CD8-positive, alpha-beta memory T cell (primary cell): ENCODE measurements at regions of chr10 and their contacts with region 1.

Region 1: GRCh38 chr10:100338434-100339036 is 8.5 kb upstream of the SCD start:
- DNase-seq: peak; percentile 63 to 80 (median 69)
- H3K4me3 ChIP-seq: no peak overlapping the region
- H3K4me3 Mint-ChIP-seq: no peak overlapping the region
- H3K27ac ChIP-seq: no peak overlapping the region
- H3K27ac Mint-ChIP-seq: peak overlapping the region in 2 of 8 donors; percentile 9 to 32
- H3K4me1 ChIP-seq: no peaks in the 10 kb centered on the region
- H3K4me1 Mint-ChIP-seq: no peaks in the 10 kb centered on the region
- H3K27me3 ChIP-seq: no peaks in the 10 kb centered on the region
- H3K27me3 Mint-ChIP-seq: peaks cover 8 to 18% of the 10 kb centered on the region in 2 donors

Region 2: GRCh38 chr10:100267237-100268104 is 71.1 kb before region 1 on chr10 and contains the start of gene CWF19L1:
- CTCF ChIA-PET with region 1: no interaction called
- POLR2A ChIA-PET with region 1: no interaction called
- DNase-seq: peak; percentile 60 to 80 (median 69)
- H3K4me3 ChIP-seq: peak within 1 kb of the TSS; percentile 99
- H3K4me3 Mint-ChIP-seq: peak within 1 kb of the TSS; percentile 96 to 100 (median 100)
- H3K27ac ChIP-seq: peak within 1 kb of the TSS; percentile 92
- H3K27ac Mint-ChIP-seq: peak within 1 kb of the TSS; percentile 86 to 100 (median 99)
- H3K4me1 ChIP-seq: peaks cover 25% of the 10 kb centered on the region
- H3K4me1 Mint-ChIP-seq: peaks cover 23 to 40% (median 34%) of the 10 kb centered on the region in 3 donors
- H3K27me3 ChIP-seq: no peaks in the 10 kb centered on the region
- H3K27me3 Mint-ChIP-seq: no peaks in the 10 kb centered on the region
- total RNA-seq, gene CWF19L1: 45.7 to 48.5 TPM

Region 3: DNA sequence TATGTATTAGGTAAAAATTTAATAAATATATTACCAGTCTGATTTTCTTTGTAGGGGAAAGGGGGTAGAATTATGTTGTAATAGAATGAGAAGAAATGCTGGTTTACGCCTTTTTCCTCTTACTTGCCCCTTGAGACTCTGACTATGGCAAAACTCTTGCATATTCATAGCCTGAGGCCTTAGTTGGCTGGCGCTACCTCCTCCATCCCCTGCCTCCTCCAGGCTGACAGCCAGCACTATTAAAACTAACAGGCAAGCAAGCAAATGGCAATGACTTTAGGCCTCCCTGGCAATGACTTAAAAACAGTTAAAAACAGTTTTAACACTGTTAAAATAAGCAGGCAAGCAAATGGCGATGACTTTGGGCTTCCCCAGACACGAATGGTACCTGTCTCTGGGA is 22.9 kb before region 1 on chr10:
- CTCF ChIA-PET with region 1: no interaction called
- POLR2A ChIA-PET with region 1: no interaction called
- DNase-seq: no peak
- H3K4me3 ChIP-seq: no peak overlapping the region
- H3K4me3 Mint-ChIP-seq: no peak overlapping the region
- H3K27ac ChIP-seq: no peak overlapping the region
- H3K27ac Mint-ChIP-seq: no peak overlapping the region
- H3K4me1 ChIP-seq: no peaks in the 10 kb centered on the region
- H3K4me1 Mint-ChIP-seq: no peaks in the 10 kb centered on the region
- H3K27me3 ChIP-seq: peaks cover 6% of the 10 kb centered on the region
- H3K27me3 Mint-ChIP-seq: peaks cover 25 to 79% of the 10 kb centered on the region in 2 donors

Region 4: DNA sequence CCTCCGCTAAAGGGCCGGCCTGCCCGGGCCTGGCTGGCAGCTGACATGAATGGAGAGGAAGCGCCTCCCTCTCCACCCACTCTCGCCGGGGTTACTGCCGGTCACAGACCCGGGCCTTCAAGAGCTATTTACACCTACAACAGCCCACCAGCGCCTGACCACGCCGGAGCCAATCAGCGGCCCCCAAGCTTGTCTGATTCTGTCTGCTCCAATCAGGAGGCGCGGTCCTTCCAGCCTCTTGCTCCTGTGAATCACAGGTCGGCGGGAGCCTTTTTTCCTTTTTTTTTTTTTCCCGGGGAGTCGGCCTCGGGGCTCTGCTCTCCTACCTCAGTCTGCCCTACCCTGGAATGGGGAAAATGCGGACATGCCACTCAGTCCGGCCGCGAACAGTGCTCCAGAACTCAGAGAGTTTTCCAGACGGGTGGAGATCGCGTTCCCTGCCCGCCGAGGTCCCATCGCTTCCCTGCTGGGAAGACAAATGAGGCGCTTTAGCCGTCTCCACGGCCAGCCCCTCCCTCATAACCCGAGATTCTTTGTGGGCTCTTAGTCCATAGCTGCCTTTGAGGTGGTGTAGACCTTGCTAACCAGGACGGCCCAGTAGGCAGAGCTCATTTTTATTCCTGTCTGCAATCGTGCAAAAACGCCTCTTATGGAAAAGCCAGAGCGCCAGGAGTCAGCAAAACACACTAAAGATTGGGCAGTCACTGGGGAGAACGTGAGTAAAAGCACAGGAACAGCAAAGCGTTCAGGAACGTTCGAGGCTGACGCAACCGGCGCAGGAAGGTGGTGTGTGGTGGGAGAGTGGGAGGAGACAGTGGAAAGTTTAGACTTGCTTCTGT is 35.0 kb after region 1 on chr10:
- CTCF ChIA-PET with region 1: interaction called, 7 read pairs
- POLR2A ChIA-PET with region 1: interaction called, 12 read pairs
- DNase-seq: peak; percentile 78 to 86 (median 82)
- H3K4me3 ChIP-seq: peak overlapping the region; percentile 81
- H3K4me3 Mint-ChIP-seq: no peak overlapping the region
- H3K27ac ChIP-seq: peak overlapping the region; percentile 94
- H3K27ac Mint-ChIP-seq: no peak overlapping the region
- H3K4me1 ChIP-seq: peaks cover 41% of the 10 kb centered on the region
- H3K4me1 Mint-ChIP-seq: peaks cover 23 to 30% (median 25%) of the 10 kb centered on the region in 3 donors
- H3K27me3 ChIP-seq: no peaks in the 10 kb centered on the region
- H3K27me3 Mint-ChIP-seq: no peaks in the 10 kb centered on the region

Region 5: GRCh38 chr10:100391163-100392002 is 52.8 kb after region 1 on chr10:
- CTCF ChIA-PET with region 1: no interaction called
- POLR2A ChIA-PET with region 1: no interaction called
- DNase-seq: no peak
- H3K4me3 ChIP-seq: no peak overlapping the region
- H3K4me3 Mint-ChIP-seq: no peak overlapping the region
- H3K27ac ChIP-seq: no peak overlapping the region
- H3K27ac Mint-ChIP-seq: peak overlapping the region in 4 of 8 donors; percentile 3 to 82 (median 38)
- H3K4me1 ChIP-seq: no peaks in the 10 kb centered on the region
- H3K4me1 Mint-ChIP-seq: peaks cover 5 to 9% (median 6%) of the 10 kb centered on the region in 3 donors
- H3K27me3 ChIP-seq: no peaks in the 10 kb centered on the region
- H3K27me3 Mint-ChIP-seq: peaks cover 0 to 2% of the 10 kb centered on the region in 2 donors